ENCODE measurements at regions of chr2 and their contacts with region 1.

Region 1: GRCh38 chr2:175282290-175282689 is 100.8 kb upstream of the ATP5MC3 start:
- DNase-seq: no peak
- H3K4me3 Mint-ChIP-seq: no peak overlapping the region
- H3K27ac Mint-ChIP-seq: no peak overlapping the region
- H3K4me1 Mint-ChIP-seq: no peaks in the 10 kb centered on the region
- H3K27me3 Mint-ChIP-seq: peaks cover 11% of the 10 kb centered on the region

Region 2: GRCh38 chr2:175036582-175037018 is 245.7 kb before region 1 on chr2:
- intact Hi-C with region 1: loop called (anchors 1 kb)
- DNase-seq: no peak
- H3K4me3 Mint-ChIP-seq: no peak overlapping the region
- H3K27ac Mint-ChIP-seq: no peak overlapping the region
- H3K4me1 Mint-ChIP-seq: peaks cover 7% of the 10 kb centered on the region
- H3K27me3 Mint-ChIP-seq: peaks cover 3% of the 10 kb centered on the region

Region 3: DNA sequence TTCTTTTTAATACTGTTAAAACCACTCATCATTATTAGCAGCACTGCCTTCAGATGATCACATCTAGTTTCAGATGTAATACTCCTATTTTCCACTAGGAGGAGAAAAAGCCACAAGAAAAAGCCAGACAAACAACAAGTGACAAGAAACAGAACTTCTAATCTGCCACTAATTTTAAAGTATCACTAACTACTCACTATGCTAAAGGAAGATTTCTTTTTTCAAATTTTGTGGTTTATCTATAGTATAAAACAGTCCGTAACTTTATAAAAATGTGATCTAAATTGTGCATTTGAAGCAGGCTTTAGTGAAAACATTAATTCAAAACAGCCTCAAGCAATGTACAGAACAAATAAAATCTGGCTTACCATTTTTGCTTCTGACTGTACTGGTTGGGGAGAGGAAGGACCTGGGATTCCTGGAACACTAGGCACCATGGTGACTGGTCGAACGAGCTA is 171.1 kb before region 1 on chr2:
- intact Hi-C with region 1: loop called (anchors 1 kb)
- DNase-seq: no peak
- H3K4me3 Mint-ChIP-seq: no peak overlapping the region
- H3K27ac Mint-ChIP-seq: peak overlapping the region; percentile 31
- H3K4me1 Mint-ChIP-seq: peaks cover 4% of the 10 kb centered on the region
- H3K27me3 Mint-ChIP-seq: no peaks in the 10 kb centered on the region

Region 4: DNA sequence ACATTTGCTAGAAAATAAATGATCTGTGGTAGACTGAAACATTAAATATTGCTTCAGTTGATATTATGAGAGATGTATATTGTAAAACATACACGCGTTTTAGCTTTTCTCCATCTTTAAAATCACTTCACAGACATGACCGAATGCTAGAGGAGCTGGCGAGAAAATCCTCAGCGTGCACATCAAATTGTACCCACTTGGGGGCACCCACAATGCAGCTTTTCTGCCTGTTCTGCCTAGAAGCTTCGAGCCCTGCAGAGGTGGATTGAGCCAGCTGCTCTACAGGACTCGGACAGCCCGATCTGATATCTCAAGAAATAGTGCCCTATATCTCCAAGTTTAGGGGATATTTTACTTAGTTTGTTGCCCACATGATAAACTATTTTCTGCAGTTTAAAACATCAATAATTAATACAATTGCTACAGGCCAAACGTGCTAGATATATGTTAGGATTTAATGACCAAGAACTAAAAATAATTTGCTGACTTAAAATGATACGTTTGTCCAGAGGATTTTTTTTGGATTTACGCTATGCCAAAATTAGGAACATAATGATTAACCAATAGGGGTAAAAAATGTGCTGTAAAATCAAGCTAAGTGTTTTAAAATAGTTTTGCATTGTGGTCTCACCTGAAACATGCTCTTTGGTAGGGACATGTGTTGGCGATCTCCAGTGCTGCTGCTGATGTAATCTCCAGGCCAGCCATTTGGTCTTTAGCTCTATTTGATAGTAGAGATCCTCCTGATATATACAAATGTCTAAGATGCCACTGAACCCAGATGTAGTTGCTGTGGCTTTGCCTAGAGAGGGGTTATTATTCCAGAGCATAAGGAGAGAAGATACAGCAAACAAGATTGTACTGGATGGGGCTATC is 78.4 kb before region 1 on chr2:
- intact Hi-C with region 1: loop called (anchors 1 kb)
- DNase-seq: peak; percentile 23
- H3K4me3 Mint-ChIP-seq: no peak overlapping the region
- H3K27ac Mint-ChIP-seq: no peak overlapping the region
- H3K4me1 Mint-ChIP-seq: peaks cover 11% of the 10 kb centered on the region
- H3K27me3 Mint-ChIP-seq: peaks cover 20% of the 10 kb centered on the region

Region 5: DNA sequence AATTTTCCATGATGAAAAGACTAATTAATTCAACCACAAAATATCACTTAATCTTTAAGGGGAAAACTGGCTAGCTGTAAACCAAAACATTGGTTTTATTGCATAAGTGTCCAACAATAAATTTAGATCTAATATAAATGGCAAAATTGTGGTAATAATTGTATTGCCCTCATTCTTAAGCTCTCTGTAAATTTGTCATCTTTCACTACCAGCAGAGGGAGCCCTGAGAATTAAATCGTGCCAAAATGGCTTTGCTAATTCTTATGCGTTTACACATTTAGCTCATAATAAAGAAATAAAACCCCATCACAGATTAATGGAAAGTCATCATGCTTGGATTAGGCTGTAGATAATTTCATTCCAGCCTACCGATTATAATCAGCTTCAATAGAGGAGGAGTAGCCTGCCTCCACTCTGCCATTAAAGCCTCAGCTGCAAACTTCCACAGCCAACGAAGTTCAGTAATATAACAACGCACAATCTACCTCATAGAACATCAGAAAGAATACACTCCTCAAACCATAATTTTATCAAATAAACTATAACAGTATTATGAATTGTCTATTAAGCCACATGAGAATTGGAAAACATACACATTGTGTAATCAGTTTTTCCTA is 30.8 kb before region 1 on chr2:
- intact Hi-C with region 1: loop called (anchors 1 kb)
- DNase-seq: no peak
- H3K4me3 Mint-ChIP-seq: no peak overlapping the region
- H3K27ac Mint-ChIP-seq: no peak overlapping the region
- H3K4me1 Mint-ChIP-seq: peaks cover 5% of the 10 kb centered on the region
- H3K27me3 Mint-ChIP-seq: peaks cover 23% of the 10 kb centered on the region